Panc1 (cell line): ENCODE measurements at regions of chr2 and their contacts with region 1.

Region 1: GRCh38 chr2:212237350-212238095 is 301.1 kb downstream of the ERBB4 start:
- DNase-seq: no peak
- ATAC-seq: no peak
- H3K4me3 ChIP-seq: no peak overlapping the region
- H3K27ac ChIP-seq: no peak overlapping the region
- H3K4me1 ChIP-seq: no peaks in the 10 kb centered on the region
- H3K27me3 ChIP-seq: no peaks in the 10 kb centered on the region
- CTCF ChIP-seq: no peak

Region 2: DNA sequence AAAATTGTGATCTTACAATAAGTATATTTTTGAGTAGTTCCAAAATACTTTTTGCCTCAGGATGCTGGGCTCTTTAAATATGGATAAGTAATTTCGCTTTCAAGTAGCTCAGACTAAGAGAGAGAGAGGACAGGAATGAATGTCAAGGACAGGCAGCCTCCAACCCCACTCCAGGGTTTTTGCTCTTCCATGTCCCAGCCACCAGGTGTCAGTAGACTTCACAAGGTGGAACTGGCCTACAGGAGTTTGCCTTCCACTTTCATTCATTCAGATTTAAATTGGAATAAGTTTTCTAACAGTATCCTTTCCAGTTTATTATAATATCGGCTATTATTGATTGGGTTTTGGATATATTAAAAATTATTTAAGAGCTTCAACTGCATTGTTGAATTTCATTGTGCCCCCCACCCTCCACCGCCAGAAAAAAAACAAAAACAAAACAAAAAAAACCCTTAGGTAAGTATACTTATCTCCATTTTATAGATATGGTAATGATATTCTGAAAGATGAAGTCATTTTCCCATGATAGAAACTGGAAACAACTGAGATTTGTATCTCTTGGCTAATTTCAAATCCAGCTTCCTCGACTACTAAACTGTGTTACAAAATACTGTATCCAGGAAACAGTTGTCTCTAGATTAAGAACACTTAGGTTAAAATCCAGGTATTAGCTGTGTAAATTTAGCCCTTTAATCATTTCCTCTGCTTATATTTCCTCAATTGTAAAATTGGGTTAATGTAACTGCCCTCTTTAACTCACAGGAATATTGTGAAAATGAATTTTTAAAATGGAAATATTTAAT is 492.0 kb before region 1 on chr2:
- CTCF ChIA-PET with region 1: interaction called, 10 read pairs
- POLR2A ChIA-PET with region 1: no interaction called
- in situ Hi-C with region 1: no loop called
- intact Hi-C with region 1: no loop called
- DNase-seq: peak; percentile 43
- ATAC-seq: peak; percentile 94
- H3K4me3 ChIP-seq: no peak overlapping the region
- H3K27ac ChIP-seq: no peak overlapping the region
- H3K4me1 ChIP-seq: no peaks in the 10 kb centered on the region
- H3K27me3 ChIP-seq: no peaks in the 10 kb centered on the region
- CTCF ChIP-seq: peak; percentile 88

Region 3: DNA sequence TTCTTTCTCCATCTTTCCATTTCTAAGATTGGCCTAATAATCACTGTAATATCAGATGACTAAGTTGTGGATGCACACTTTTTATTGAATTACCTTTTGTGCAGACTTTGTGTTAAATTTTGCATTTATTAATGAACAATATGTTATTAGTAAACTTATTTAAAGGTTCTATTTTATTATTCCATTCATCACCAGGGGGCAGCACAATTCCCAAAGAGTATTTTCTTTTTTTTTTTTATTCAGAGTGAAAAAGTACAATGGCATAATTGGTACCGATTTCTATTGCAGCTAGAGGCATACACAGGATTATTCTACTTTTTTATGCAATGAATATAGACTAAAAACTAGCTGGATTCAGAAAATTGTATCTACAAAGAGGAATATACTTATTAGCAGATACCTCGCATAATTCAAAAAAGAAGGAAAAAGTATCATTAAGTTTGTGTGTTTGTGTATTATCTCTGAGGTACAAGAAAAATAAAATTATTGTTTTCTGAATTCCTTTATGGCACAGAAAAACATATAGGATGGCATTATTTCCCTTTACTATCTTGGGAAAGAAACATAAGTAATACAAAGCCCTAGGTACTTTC is 89.5 kb before region 1 on chr2:
- CTCF ChIA-PET with region 1: no interaction called
- POLR2A ChIA-PET with region 1: no interaction called
- in situ Hi-C with region 1: no loop called
- intact Hi-C with region 1: no loop called
- DNase-seq: no peak
- ATAC-seq: no peak
- H3K4me3 ChIP-seq: no peak overlapping the region
- H3K27ac ChIP-seq: no peak overlapping the region
- H3K4me1 ChIP-seq: no peaks in the 10 kb centered on the region
- H3K27me3 ChIP-seq: no peaks in the 10 kb centered on the region
- CTCF ChIP-seq: peak; percentile 43; the same call in 1 of the 2 replicates

Region 4: DNA sequence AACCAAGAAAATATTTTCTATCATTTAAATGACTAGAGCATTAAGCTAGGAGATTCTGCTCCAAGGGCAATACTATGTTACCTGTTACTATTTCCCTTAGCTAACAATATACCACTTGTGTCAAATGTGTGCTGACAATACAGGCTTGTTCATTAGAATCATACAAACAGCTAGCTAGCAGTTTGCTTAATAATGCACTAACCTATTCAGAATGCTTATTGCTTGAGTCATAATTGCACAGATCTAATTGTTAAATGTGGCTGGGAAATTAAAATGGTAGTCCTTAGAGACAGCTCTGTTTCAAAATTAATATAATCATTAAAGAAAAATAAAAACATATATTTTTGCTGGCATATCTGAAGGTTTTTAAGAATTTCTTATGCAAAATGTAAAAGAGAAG is 43.1 kb before region 1 on chr2:
- CTCF ChIA-PET with region 1: no interaction called
- POLR2A ChIA-PET with region 1: no interaction called
- in situ Hi-C with region 1: no loop called
- intact Hi-C with region 1: no loop called
- DNase-seq: no peak
- ATAC-seq: no peak
- H3K4me3 ChIP-seq: no peak overlapping the region
- H3K27ac ChIP-seq: no peak overlapping the region
- H3K4me1 ChIP-seq: no peaks in the 10 kb centered on the region
- H3K27me3 ChIP-seq: no peaks in the 10 kb centered on the region
- CTCF ChIP-seq: no peak